ENCODE measurements at regions of chr2 and their contacts with region 1.

Region 1: DNA sequence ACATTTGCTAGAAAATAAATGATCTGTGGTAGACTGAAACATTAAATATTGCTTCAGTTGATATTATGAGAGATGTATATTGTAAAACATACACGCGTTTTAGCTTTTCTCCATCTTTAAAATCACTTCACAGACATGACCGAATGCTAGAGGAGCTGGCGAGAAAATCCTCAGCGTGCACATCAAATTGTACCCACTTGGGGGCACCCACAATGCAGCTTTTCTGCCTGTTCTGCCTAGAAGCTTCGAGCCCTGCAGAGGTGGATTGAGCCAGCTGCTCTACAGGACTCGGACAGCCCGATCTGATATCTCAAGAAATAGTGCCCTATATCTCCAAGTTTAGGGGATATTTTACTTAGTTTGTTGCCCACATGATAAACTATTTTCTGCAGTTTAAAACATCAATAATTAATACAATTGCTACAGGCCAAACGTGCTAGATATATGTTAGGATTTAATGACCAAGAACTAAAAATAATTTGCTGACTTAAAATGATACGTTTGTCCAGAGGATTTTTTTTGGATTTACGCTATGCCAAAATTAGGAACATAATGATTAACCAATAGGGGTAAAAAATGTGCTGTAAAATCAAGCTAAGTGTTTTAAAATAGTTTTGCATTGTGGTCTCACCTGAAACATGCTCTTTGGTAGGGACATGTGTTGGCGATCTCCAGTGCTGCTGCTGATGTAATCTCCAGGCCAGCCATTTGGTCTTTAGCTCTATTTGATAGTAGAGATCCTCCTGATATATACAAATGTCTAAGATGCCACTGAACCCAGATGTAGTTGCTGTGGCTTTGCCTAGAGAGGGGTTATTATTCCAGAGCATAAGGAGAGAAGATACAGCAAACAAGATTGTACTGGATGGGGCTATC is 22.3 kb upstream of the ATP5MC3 start:
- H3K4me3 ChIP-seq: no peak overlapping the region
- H3K27ac ChIP-seq: no peak overlapping the region
- H3K4me1 ChIP-seq: no peaks in the 10 kb centered on the region
- CTCF ChIP-seq: peak; percentile 57

Region 2: DNA sequence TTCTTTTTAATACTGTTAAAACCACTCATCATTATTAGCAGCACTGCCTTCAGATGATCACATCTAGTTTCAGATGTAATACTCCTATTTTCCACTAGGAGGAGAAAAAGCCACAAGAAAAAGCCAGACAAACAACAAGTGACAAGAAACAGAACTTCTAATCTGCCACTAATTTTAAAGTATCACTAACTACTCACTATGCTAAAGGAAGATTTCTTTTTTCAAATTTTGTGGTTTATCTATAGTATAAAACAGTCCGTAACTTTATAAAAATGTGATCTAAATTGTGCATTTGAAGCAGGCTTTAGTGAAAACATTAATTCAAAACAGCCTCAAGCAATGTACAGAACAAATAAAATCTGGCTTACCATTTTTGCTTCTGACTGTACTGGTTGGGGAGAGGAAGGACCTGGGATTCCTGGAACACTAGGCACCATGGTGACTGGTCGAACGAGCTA is 92.6 kb before region 1 on chr2:
- CTCF ChIA-PET with region 1: interaction called, 11 read pairs
- POLR2A ChIA-PET with region 1: no interaction called
- H3K4me3 ChIP-seq: no peak overlapping the region
- H3K27ac ChIP-seq: no peak overlapping the region
- H3K4me1 ChIP-seq: no peaks in the 10 kb centered on the region
- CTCF ChIP-seq: no peak

Region 3: DNA sequence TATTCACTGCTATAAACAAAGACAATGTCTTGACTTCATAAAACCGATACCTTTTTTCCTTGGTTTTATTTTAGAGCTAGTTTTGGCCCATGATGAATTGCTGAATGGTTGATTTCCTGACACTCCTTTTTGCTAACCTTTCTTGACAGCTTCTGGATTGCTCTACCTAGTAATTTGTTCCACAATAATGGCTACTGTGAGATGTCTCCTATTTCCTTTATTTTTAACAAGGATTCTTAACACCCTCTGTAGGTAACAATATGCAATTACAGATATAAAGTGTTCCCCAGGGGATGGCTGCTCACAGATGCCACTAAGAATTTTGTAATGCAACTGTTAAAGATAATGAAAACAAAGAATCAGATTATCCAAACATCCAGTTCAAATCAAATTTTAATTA is 78.4 kb after region 1 on chr2:
- CTCF ChIA-PET with region 1: interaction called, 67 read pairs
- POLR2A ChIA-PET with region 1: no interaction called
- H3K4me3 ChIP-seq: no peak overlapping the region
- H3K27ac ChIP-seq: no peak overlapping the region
- H3K4me1 ChIP-seq: no peaks in the 10 kb centered on the region
- CTCF ChIP-seq: peak; percentile 16; the same call in 1 of the 2 replicates

Region 4: GRCh38 chr2:175326801-175327200 is 122.9 kb after region 1 on chr2:
- CTCF ChIA-PET with region 1: interaction called, 21 read pairs
- POLR2A ChIA-PET with region 1: no interaction called
- H3K4me3 ChIP-seq: no peak overlapping the region
- H3K27ac ChIP-seq: no peak overlapping the region
- H3K4me1 ChIP-seq: no peaks in the 10 kb centered on the region
- CTCF ChIP-seq: no peak

Measured in HEK293 (cell line).